H1 (cell line): ENCODE measurements at regions of chr1 and their contacts with region 1.

Region 1: DNA sequence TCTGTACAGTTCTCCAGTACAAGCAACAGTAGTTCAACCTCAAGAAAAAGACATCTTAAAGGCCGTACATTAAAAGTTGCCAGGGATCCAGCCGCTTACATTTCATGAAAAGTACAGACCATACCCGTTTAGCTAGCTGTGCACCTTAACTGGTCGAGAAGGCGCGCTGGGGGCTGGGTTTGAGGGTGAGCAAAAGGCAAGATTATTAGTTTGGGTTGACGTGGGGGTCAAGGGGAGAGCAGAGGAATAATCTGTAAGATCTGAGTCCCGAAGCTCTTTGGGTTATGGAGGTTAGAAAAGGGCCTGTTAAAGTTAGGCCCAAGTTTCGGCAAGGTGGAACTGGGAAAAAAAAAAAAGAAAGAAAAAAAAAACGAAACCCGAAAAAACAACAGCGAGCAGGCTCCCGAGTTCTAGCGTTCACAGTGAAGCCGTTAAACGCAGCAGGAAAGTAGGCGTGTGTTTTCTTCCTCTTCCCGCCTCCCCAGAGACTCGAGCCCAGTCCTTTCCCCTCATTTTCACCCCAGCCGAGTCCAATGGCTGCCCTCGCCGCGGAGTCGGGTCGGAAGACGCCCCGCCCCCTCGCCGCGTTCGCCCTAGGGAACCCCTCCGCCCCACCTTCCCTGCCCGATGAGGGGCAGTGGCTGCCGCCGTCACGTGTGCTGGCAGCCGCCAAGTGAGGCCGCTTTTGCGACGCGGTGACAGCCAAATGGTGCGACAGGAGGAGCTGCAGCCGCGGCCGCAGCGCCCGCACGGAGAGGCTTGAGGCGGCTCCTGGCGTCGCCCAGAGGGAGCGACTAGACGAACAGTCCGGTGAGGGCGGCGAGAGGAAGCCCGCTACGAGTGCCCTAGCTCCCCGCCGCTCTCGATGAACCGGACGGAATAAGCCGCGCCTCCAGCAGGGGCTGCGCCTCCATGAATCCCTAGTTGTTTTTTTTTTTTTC is at the start of gene PKN2:
- DNase-seq: peak; percentile 96 to 97
- H3K4me3 ChIP-seq: peak within 1 kb of the TSS; percentile 62 to 96 (median 92)
- H3K27ac ChIP-seq: peak within 1 kb of the TSS; percentile 89
- H3K4me1 ChIP-seq: 0 out of 7 replicates have a peak, but pooled peaks cover 0 to 3% (median 0%) of the 10 kb centered on the region in 4 experiments
- H3K27me3 ChIP-seq: no peaks in the 10 kb centered on the region
- CTCF ChIP-seq: peak in 2 of 3 experiments; percentile 19 to 22; a peak in 2 of 4 replicates
- EP300 ChIP-seq: peak in 1 of 2 experiments; percentile 61; a peak in 1 of 3 replicates
- POLR2A ChIP-seq: peak; percentile 94 to 96
- RAD21 ChIP-seq: peak; percentile 13 to 18; a peak in 3 of 4 replicates
- total RNA-seq, gene PKN2: 31.4 and 32.0 TPM in 2 replicates

Region 2: DNA sequence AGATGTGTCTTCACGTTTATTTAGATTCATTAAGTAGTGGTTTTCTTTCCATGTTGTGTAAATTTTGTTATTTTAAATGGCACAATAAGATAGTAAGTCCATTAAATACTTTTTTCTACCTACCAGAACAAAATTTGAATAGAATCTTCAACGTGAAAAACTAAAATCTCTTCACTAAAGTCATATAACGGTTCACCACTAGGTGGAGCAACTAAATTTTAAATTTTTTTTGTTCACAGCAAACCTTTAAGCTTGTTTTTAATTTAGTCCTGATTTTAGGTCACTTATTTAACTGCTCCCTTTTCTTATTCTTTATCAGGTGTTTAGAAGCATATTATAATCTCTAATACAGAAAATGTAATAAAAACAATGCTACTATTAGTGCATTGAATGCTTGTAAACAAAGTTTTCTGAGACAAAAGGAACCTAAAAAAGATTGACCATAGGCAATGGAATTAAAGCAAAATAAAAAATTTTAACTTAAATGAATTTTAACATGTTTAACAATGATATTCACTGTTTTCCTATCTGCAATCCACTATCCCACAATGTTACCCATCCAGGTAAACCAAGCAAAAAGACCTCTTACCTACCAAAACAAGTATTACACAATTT is 28.0 kb before region 1 on chr1:
- CTCF ChIA-PET with region 1: interaction called, 37 read pairs
- POLR2A ChIA-PET with region 1: interaction called, 6 read pairs
- DNase-seq: no peak
- H3K4me3 ChIP-seq: no peak overlapping the region
- H3K27ac ChIP-seq: no peak overlapping the region
- H3K4me1 ChIP-seq: peaks cover 0 to under 1% (median 0%) of the 10 kb centered on the region in 4 experiments; a peak in 1 of 7 replicates
- H3K27me3 ChIP-seq: peaks cover 0 to 1% (median 0%) of the 10 kb centered on the region in 4 experiments; a peak in 1 of 7 replicates
- CTCF ChIP-seq: peak in 1 of 3 experiments; percentile 49; a peak in 2 of 4 replicates
- EP300 ChIP-seq: no peak
- POLR2A ChIP-seq: no peak
- RAD21 ChIP-seq: peak in 1 of 2 experiments; percentile 21; a peak in 2 of 4 replicates

Region 3: DNA sequence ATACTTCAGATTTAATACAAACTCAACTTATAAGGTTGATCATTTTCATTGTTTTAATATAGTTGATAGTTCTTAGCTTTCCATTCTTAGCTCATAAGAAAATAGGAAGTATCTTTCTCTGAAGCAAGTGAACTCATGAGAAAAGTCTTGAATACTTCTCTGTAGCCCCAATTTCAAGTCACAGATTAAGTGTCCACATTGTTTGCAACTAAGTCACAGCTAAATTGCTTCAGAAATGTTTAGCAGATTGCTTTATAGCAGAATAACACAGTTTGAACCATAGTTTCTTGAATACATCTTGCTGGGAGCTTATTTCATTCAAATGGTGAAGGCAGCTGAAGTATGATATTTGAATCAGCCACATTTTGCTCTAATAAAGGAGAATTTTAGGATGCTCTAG is 10.4 kb before region 1 on chr1:
- CTCF ChIA-PET with region 1: interaction called, 4 read pairs
- POLR2A ChIA-PET with region 1: interaction called, 17 read pairs
- DNase-seq: no peak
- H3K4me3 ChIP-seq: no peak overlapping the region
- H3K27ac ChIP-seq: no peak overlapping the region
- H3K4me1 ChIP-seq: no peaks in the 10 kb centered on the region
- H3K27me3 ChIP-seq: no peaks in the 10 kb centered on the region
- CTCF ChIP-seq: no peak
- EP300 ChIP-seq: no peak
- POLR2A ChIP-seq: no peak
- RAD21 ChIP-seq: no peak

Region 4: GRCh38 chr1:88698140-88698539 is 14.3 kb after region 1 on chr1:
- CTCF ChIA-PET with region 1: interaction called, 4 read pairs
- POLR2A ChIA-PET with region 1: interaction called, 25 read pairs
- DNase-seq: no peak
- H3K4me3 ChIP-seq: no peak overlapping the region
- H3K27ac ChIP-seq: no peak overlapping the region
- H3K4me1 ChIP-seq: peaks cover 0 to 5% (median 0%) of the 10 kb centered on the region in 4 experiments; a peak in 1 of 7 replicates
- H3K27me3 ChIP-seq: no peaks in the 10 kb centered on the region
- CTCF ChIP-seq: no peak
- EP300 ChIP-seq: no peak
- POLR2A ChIP-seq: no peak
- RAD21 ChIP-seq: no peak

Region 5: GRCh38 chr1:88736639-88737248 is 52.9 kb after region 1 on chr1:
- CTCF ChIA-PET with region 1: interaction called, 11 read pairs
- POLR2A ChIA-PET with region 1: interaction called, 4 read pairs
- DNase-seq: peak; percentile 25 to 71
- H3K4me3 ChIP-seq: no peak overlapping the region
- H3K27ac ChIP-seq: no peak overlapping the region
- H3K4me1 ChIP-seq: peaks cover 0 to 10% (median 7%) of the 10 kb centered on the region in 4 experiments; a peak in 3 of 7 replicates
- H3K27me3 ChIP-seq: no peaks in the 10 kb centered on the region
- CTCF ChIP-seq: peak; percentile 47 to 92 (median 88)
- EP300 ChIP-seq: no peak
- POLR2A ChIP-seq: no peak
- RAD21 ChIP-seq: peak; percentile 98